Gastrocnemius medialis (tissue), 4 donors: ENCODE measurements at regions of chr17 and their contacts with region 1.

Region 1: GRCh38 chr17:50478391-50479381 is at the start of gene RSAD1:
- DNase-seq: peak; percentile 77 to 89
- ATAC-seq: peak; percentile 62 to 71
- H3K4me3 ChIP-seq: peak within 1 kb of the TSS; percentile 72 to 91 (median 82)
- H3K27ac ChIP-seq: peak within 1 kb of the TSS; percentile 95 to 98 (median 97)
- H3K4me1 ChIP-seq: peaks cover 32 to 39% of the 10 kb centered on the region in 2 donors
- H3K27me3 ChIP-seq: no peaks in the 10 kb centered on the region
- CTCF ChIP-seq: peak; percentile 81 to 96 (median 95)
- POLR2A ChIP-seq: peak; percentile 93 to 97
- total RNA-seq, gene RSAD1: 27.1 to 67.4 (median 52.7) TPM

Region 2: GRCh38 chr17:50361561-50362480 is 116.9 kb before region 1 on chr17:
- in situ Hi-C with region 1: no loop called
- intact Hi-C with region 1: loop called (anchors 5 kb)
- DNase-seq: peak in 1 of 2 donors; percentile 48
- ATAC-seq: peak; percentile 67 to 86
- H3K4me3 ChIP-seq: no peak overlapping the region
- H3K27ac ChIP-seq: peak overlapping the region in 1 of 4 donors; percentile 23
- H3K4me1 ChIP-seq: peaks cover 0 to 5% of the 10 kb centered on the region in 2 donors
- H3K27me3 ChIP-seq: no peaks in the 10 kb centered on the region
- CTCF ChIP-seq: peak; percentile 48 to 77 (median 65)
- POLR2A ChIP-seq: no peak

Region 3: DNA sequence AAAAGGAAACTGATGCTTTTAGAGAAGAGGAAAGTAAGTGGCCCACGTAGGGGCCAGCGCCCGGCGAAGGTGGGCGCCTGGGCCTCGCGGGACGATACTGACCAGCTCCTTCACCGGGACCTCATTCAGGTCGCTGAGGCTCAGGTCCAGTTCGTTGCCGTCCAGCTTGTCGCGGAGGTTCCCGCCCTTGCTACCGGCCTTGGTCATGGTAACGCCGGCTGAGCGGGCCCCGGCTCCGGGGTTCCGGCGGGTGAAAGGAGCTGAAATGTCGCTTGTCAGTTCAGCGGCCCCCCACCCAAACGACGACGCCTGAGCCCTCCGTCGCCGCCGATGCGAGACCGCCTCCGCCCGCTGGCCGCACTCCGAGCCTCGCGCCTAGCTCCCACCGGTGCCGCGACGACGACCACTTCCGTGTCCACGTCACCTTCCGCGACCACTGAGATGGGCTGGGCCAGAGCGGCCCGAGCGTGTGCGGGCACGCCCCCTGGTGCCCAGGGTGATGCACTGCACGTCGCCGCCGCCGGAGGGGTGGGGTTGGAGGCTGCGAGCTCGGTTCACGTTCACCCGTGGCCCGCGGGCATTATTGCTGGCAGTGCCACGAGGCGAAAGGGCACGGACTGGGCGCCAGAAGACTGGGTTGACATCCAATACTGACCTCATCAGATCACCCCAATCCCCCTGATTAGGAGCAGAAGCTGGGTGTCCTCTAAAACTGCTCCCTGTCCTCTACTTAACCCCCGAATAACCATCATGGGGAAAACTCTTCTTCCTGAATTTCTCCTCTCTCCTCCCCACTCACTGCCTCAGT is 81.4 kb before region 1 on chr17 and contains the start of gene LRRC59:
- in situ Hi-C with region 1: loop called in 1 of 4 experiments (anchors 25 kb)
- intact Hi-C with region 1: no loop called
- DNase-seq: peak; percentile 64 to 79
- ATAC-seq: peak; percentile 93 to 94
- H3K4me3 ChIP-seq: peak within 1 kb of the TSS; percentile 80 to 96 (median 92)
- H3K27ac ChIP-seq: peak within 1 kb of the TSS; percentile 80 to 85 (median 84)
- H3K4me1 ChIP-seq: peaks cover 15 to 17% of the 10 kb centered on the region in 2 donors
- H3K27me3 ChIP-seq: no peaks in the 10 kb centered on the region
- CTCF ChIP-seq: peak; percentile 87 to 99 (median 96)
- POLR2A ChIP-seq: peak; percentile 59 to 82
- total RNA-seq, gene LRRC59: 25.4 to 73.2 (median 55.8) TPM

Region 4: DNA sequence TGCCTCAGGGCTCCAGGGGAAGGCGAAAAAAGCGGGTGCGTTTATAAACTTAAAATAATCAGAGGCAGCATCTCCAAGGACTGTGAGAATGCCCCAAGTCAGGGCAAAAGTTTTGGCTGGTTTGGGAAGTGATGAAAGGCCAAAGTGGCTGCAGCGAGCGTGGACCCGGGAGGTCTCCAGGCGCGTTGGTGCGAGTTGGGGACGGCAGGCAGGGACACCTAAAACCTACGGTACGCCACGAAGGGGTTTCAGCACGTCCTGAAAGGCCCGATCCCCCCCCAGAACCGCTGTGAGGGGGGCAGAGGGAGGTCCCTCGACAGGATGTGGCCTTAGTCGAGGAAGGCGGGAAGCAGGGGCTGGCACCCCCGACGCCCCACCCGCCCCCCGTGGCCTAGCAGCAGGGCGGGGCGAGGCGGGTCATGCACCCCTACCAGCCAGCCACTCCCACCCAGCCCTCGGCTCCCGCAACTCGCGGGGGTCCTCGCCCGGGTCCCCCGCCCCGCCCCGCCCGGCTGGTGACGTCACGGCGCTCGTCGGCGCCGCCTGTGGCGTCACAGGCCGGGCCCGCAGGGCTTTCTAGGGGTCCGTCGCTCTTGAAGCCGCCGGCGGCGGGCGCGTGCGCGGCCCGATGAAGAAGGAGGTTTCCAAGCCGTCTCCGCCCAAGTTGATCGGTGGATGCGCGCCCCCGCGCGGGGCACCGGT is 29.3 kb after region 1 on chr17 and contains the start of gene MYCBPAP:
- in situ Hi-C with region 1: no loop called
- intact Hi-C with region 1: loop called (anchors 2 kb)
- DNase-seq: peak; percentile 42 to 64
- ATAC-seq: peak; percentile 67 to 68
- H3K4me3 ChIP-seq: peak within 1 kb of the TSS; percentile 50 to 85 (median 64)
- H3K27ac ChIP-seq: peak within 1 kb of the TSS; percentile 17 to 64 (median 57)
- H3K4me1 ChIP-seq: peaks cover 0 to 3% of the 10 kb centered on the region in 2 donors
- H3K27me3 ChIP-seq: no peaks in the 10 kb centered on the region
- CTCF ChIP-seq: peak in 1 of 5 experiments; percentile 34
- POLR2A ChIP-seq: peak in 1 of 2 donors; percentile 14
- total RNA-seq, gene MYCBPAP: not detected

Region 5: GRCh38 chr17:50626037-50626574 is 147.4 kb after region 1 on chr17:
- in situ Hi-C with region 1: no loop called
- intact Hi-C with region 1: loop called (anchors 2 kb)
- DNase-seq: peak; percentile 16 to 64
- ATAC-seq: peak; percentile 79 to 88
- H3K4me3 ChIP-seq: no peak overlapping the region
- H3K27ac ChIP-seq: no peak overlapping the region
- H3K4me1 ChIP-seq: no peaks in the 10 kb centered on the region
- H3K27me3 ChIP-seq: peaks cover 0 to 13% (median 7%) of the 10 kb centered on the region in 3 donors
- CTCF ChIP-seq: peak; percentile 34 to 82 (median 79)
- POLR2A ChIP-seq: no peak

Region 6: DNA sequence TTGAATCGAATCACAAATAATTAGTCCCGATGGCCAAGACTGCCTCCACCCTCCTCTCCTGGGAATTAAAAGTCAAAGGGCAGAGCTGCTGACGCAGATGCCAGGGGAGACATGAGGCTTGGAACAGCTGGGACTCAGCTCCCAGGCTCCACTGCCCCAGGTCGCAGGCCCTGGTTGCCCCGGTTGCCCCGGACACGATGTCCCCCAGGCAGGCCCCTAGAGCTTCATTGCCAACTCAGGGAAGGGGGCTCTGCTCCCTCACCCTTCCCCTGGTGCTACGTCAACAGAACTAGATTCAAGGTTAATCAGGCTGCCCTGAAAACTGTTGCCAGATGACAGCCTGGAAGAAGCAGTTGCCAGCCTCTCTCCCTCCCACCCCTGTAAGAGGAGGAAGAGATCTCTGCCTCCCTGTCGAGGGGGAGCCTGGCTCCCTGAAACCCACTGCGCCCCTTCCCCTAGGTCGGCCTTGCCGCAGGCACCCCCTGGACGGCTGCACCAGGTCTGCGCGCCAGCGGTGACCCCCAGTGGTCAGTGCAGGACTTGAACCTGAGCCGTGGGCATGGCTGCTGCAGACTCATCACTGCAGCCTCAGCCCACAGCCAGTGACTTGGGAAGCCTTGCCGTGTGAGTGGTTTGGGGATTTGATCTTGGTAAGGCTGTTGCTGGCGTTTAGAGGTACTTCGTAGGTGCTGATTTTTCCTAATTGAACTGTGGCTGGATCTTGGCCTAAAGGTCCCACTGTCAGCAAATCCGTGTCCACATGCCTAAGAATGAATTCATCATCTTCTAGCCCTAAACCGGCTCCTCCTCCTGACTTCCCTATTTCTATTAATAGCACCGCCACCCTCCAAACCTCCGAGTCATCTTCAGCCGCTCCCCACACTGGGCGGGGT is 471.5 kb after region 1 on chr17:
- in situ Hi-C with region 1: no loop called
- intact Hi-C with region 1: loop called (anchors 10 kb)
- DNase-seq: peak; percentile 87 to 97
- ATAC-seq: peak; percentile 55 to 70
- H3K4me3 ChIP-seq: peak overlapping the region; percentile 4 to 32 (median 21)
- H3K27ac ChIP-seq: peak overlapping the region; percentile 98 to 100 (median 100)
- H3K4me1 ChIP-seq: peaks cover 59 to 70% of the 10 kb centered on the region in 2 donors
- H3K27me3 ChIP-seq: no peaks in the 10 kb centered on the region
- CTCF ChIP-seq: peak; percentile 79 to 96 (median 86)
- POLR2A ChIP-seq: peak; percentile 29 to 47